HAP-1 (cell line): ENCODE measurements at regions of chr3 and their contacts with region 1.

Region 1: GRCh38 chr3:123642182-123642956 is 57.5 kb upstream of the HACD2 start:
- DNase-seq: peak; percentile 86 to 90
- H3K4me3 ChIP-seq: no peak overlapping the region
- H3K4me1 ChIP-seq: no peaks in the 10 kb centered on the region
- H3K27me3 ChIP-seq: no peaks in the 10 kb centered on the region

Region 2: GRCh38 chr3:122151480-122151879 is 1490.9 kb before region 1 on chr3:
- in situ Hi-C with region 1: no loop called
- DNase-seq: no peak
- H3K4me3 ChIP-seq: no peak overlapping the region
- H3K4me1 ChIP-seq: no peaks in the 10 kb centered on the region
- H3K27me3 ChIP-seq: no peaks in the 10 kb centered on the region

Region 3: GRCh38 chr3:123186695-123187094 is 455.7 kb before region 1 on chr3:
- in situ Hi-C with region 1: no loop called
- DNase-seq: no peak
- H3K4me3 ChIP-seq: no peak overlapping the region
- H3K4me1 ChIP-seq: no peaks in the 10 kb centered on the region
- H3K27me3 ChIP-seq: no peaks in the 10 kb centered on the region

Region 4: GRCh38 chr3:123719862-123720453 is 77.6 kb after region 1 on chr3:
- in situ Hi-C with region 1: loop called (anchors 5 kb)
- DNase-seq: no peak
- H3K4me3 ChIP-seq: no peak overlapping the region
- H3K4me1 ChIP-seq: no peaks in the 10 kb centered on the region
- H3K27me3 ChIP-seq: no peaks in the 10 kb centered on the region